ENCODE measurements at regions of chr3 and their contacts with region 1.

Region 1: DNA sequence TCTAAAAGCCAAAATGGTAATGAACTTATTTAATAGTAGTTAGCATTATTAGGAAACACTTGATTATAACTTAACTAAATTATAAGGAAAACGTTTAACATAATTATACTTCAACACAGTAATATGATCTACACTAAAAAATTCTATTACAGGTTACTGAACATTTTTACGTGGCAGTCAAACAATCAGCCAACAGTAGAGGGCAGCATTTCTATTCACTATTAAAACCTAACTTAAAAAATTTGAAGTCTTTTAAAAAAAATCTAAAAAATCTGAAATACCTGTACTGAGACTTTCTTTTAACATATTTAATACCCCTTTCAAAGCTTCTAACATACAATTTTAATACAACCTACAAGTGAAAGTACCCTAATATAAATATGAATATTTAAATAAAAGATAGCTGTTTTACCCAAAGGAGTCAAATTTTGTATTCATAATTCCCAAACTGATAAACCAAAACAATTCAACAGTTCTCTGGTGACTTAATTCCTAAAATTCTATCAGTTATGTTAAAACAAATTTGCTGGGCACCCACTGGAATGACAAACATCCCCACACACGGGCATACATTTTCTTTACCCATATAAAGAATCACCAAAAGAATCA is 41.5 kb downstream of the DLG1 start:
- DNase-seq: peak in 1 of 3 donors; percentile 81
- ATAC-seq: peak; percentile 51
- H3K4me3 ChIP-seq: no peak overlapping the region
- H3K4me1 ChIP-seq: peaks cover 5% of the 10 kb centered on the region
- CTCF ChIP-seq: peak; percentile 52

Region 2: DNA sequence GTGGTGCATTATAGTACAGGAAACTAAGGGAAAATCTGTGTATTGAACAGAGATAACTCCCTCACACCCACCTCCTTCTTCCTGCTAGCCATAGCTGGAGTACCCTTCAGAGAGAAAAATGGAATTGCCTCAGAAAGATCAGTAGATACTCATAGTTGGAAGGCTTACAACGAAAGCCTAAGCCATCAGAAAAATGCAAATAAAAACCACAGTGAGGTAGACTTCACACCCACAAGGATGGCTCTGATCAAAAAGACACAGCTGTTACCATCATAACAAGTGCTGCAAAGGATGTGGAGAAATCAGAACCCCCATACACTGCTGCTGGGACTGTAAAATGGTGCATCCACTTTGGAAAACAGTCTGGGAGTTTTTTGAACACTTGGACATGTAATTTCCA is 48.9 kb after region 1 on chr3:
- intact Hi-C with region 1: no loop called
- DNase-seq: no peak
- ATAC-seq: peak; percentile 25
- H3K4me3 ChIP-seq: no peak overlapping the region
- H3K4me1 ChIP-seq: peaks cover 4% of the 10 kb centered on the region
- CTCF ChIP-seq: no peak

Region 3: GRCh38 chr3:197511130-197511529 is 254.2 kb after region 1 on chr3:
- intact Hi-C with region 1: loop called (anchors 5 to 10 kb)
- DNase-seq: no peak
- ATAC-seq: no peak
- H3K4me3 ChIP-seq: no peak overlapping the region
- H3K4me1 ChIP-seq: peaks cover 8% of the 10 kb centered on the region
- CTCF ChIP-seq: no peak

Measured in mucosa of descending colon (tissue), 3 donors.